Activated naive CD4-positive, alpha-beta T cell treated with anti-CD3 and anti-CD28 coated beads, Interleukin-2, amount 10 ng/mL, durations not matched to agents 7 days and 5 days (primary cell): ENCODE measurements at regions of chr14 and their contacts with region 1.

Region 1: GRCh38 chr14:105470804-105471610 is 3.6 kb upstream of the CRIP2 start:
- DNase-seq: no peak
- H3K4me3 Mint-ChIP-seq: no peak overlapping the region
- H3K27ac Mint-ChIP-seq: no peak overlapping the region
- H3K4me1 Mint-ChIP-seq: peaks cover 9% of the 10 kb centered on the region
- H3K27me3 Mint-ChIP-seq: peaks cover 20% of the 10 kb centered on the region

Region 2: DNA sequence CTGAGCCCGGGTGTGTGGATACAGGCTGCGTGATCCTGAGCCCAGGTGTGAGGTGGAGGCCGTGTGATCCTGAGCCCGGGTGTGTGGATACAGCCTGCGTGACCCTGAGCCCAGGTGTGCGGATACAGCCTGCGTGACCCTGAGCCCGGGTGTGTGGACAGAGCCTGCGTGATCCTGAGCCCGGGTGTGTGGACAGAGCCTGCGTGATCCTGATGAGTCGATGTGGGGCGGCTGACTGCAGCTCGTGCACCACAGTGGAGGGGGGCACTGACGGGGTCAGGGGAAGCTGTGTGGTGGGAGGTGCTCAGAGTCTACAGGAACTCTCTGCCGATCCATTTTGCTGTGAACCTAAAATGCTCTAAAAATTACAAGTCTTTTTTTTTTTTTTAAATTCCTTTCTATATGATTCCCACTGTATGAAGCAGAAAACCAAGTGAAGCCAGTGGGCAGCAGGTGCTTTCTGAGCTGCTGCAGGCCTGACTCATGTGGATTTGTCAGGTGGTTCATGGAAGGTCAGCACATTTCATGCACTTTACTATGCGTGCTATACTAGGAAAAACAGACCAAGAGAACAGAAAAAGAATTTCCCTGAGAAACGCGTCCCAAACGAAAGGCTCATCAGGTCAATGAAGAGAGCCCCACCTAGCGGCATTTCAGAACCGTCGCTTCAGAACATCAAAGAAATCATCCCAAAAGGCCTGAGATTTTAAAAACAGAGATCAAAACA is 189.5 kb before region 1 on chr14:
- CTCF ChIA-PET with region 1: no interaction called
- DNase-seq: peak; percentile 39
- H3K4me3 Mint-ChIP-seq: no peak overlapping the region
- H3K27ac Mint-ChIP-seq: no peak overlapping the region
- H3K4me1 Mint-ChIP-seq: peaks cover 37% of the 10 kb centered on the region
- H3K27me3 Mint-ChIP-seq: no peaks in the 10 kb centered on the region

Region 3: GRCh38 chr14:105456736-105457617 is 14.0 kb before region 1 on chr14:
- CTCF ChIA-PET with region 1: no interaction called
- DNase-seq: no peak
- H3K4me3 Mint-ChIP-seq: no peak overlapping the region
- H3K27ac Mint-ChIP-seq: no peak overlapping the region
- H3K4me1 Mint-ChIP-seq: no peaks in the 10 kb centered on the region
- H3K27me3 Mint-ChIP-seq: no peaks in the 10 kb centered on the region

Region 4: GRCh38 chr14:105480952-105481801 is 10.2 kb after region 1 on chr14:
- CTCF ChIA-PET with region 1: interaction called, 10 read pairs
- DNase-seq: peak; percentile 89
- H3K4me3 Mint-ChIP-seq: peak overlapping the region; percentile 47
- H3K27ac Mint-ChIP-seq: peak overlapping the region; percentile 93
- H3K4me1 Mint-ChIP-seq: peaks cover 57% of the 10 kb centered on the region
- H3K27me3 Mint-ChIP-seq: peaks cover 68% of the 10 kb centered on the region